B cell (primary cell): ENCODE measurements at regions of chrX and their contacts with region 1.

Region 1: GRCh38 chrX:37796805-37797204 is 16.9 kb downstream of the CYBB start:
- DNase-seq: peak; percentile 76
- ATAC-seq: peak; percentile 90
- H3K4me3 ChIP-seq: peak overlapping the region in 1 of 5 experiments; percentile 21
- H3K4me3 Mint-ChIP-seq: peak overlapping the region; percentile 42
- H3K27ac ChIP-seq: peak overlapping the region in 1 of 2 donors; percentile 61
- H3K27ac Mint-ChIP-seq: peak overlapping the region; percentile 76
- H3K4me1 ChIP-seq: peaks cover 53 to 60% of the 10 kb centered on the region in 2 donors
- H3K4me1 Mint-ChIP-seq: peaks cover 67% of the 10 kb centered on the region
- H3K27me3 ChIP-seq: no peaks in the 10 kb centered on the region
- H3K27me3 Mint-ChIP-seq: no peaks in the 10 kb centered on the region
- CTCF ChIP-seq: no peak

Region 2: DNA sequence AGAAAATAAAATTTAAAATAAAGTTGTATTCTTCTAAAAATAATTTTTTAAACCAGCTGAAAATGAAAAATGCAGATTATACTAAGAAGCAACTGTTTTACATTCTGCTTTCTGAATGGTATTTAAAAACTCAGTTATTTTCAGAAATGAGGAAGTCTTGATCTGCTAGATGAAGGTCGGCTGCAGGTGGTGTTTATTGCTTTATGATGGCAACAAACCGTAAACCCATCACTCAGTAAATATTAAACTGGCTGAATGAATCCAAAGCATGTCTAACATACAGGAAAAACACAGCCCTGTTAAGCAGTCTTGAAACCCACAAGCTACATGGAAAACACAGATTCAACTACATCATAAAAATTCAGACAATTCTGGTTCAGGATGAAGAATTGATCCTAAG is 21.2 kb after region 1 on chrX:
- CTCF ChIA-PET with region 1: interaction called, 18 read pairs
- POLR2A ChIA-PET with region 1: no interaction called
- intact Hi-C with region 1: loop called (anchors 2 kb)
- DNase-seq: peak; percentile 67
- ATAC-seq: peak; percentile 66
- H3K4me3 ChIP-seq: peak overlapping the region; percentile 35 to 53 (median 44)
- H3K4me3 Mint-ChIP-seq: peak overlapping the region; percentile 86
- H3K27ac ChIP-seq: peak overlapping the region; percentile 89 to 90
- H3K27ac Mint-ChIP-seq: peak overlapping the region; percentile 99
- H3K4me1 ChIP-seq: peaks cover 53 to 58% of the 10 kb centered on the region in 2 donors
- H3K4me1 Mint-ChIP-seq: peaks cover 73% of the 10 kb centered on the region
- H3K27me3 ChIP-seq: no peaks in the 10 kb centered on the region
- H3K27me3 Mint-ChIP-seq: no peaks in the 10 kb centered on the region
- CTCF ChIP-seq: no peak